Aorta (tissue), 5 donors: ENCODE measurements at regions of chr16 and their contacts with region 1.

Region 1: DNA sequence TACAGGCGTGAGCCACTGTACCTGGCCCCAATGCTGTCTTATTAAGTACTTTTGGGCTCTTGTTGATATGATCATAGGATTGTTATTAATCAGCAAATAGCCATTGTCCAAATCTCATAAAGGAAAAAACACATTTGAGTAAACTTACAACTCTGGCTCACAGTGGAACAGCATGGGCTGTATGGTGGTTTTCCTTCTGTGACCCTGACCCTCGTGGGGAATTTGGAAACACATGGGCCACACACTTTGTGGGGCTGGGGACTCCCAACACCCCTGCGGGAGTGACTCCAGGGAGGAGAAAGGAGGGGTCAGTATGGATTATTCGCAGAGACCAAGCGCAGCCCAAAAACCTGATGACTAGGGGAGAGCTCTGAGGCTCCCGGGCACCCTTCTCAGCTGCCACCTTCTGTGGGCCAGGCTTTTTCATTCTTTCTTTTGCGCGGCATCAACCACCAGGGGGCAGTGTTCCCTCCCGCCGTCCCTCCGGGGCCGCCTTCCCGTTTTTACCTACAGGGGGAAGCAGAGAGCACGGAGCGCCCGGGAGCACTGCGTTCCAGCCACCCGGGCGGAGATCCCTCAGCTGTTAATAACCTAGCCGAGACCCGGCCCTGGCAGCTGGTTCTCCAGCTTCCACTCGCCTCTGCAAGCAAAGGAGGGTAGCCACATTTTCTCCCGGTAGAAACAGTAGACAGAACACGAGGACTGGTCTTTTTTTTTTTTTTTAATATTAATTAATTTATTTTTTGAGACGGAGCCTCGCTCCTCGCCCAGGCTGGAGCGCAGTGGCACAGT is 9.7 kb downstream of the TSNAXIP1 start:
- DNase-seq: peak; percentile 87 to 96
- ATAC-seq: peak; percentile 97
- H3K4me3 ChIP-seq: no peak overlapping the region
- H3K27ac ChIP-seq: no peak overlapping the region
- H3K4me1 ChIP-seq: no peaks in the 10 kb centered on the region
- H3K27me3 ChIP-seq: no peaks in the 10 kb centered on the region

Region 2: DNA sequence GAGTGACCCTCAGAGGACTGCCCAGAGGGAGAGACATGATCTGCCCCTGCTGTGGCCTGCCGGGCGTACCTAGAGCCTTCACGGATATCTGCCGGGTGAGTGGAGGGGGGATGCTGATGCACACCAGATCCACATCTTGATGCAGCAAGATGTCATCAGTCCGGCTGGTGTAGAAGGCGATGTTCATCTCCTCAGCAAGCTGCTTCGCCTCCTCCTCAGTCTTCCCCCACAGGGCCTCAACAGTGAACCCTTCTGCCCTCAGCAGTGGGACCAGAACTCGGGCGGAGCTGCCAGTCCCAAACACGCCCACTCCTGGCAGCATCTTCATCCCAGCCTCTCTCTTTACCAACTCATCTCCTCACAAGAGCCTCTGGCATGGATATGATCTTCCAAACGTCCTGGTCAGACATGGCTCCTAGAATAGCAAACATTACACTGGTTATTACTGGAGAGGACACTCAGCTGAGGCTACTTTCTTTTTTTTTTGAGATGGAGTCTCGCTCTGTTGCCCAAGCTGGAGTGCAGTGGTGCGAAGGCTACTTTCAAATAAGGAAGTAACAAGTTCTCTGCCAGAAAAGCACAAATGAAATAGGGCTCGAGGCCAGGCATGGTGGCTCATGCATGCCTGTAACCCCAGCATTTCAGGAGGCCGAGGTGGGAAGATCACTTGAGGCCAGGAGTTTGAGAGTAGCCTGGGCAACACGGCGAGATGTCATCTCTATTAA is 130.9 kb before region 1 on chr16:
- intact Hi-C with region 1: no loop called
- DNase-seq: no peak
- ATAC-seq: peak; percentile 15
- H3K4me3 ChIP-seq: no peak overlapping the region
- H3K27ac ChIP-seq: no peak overlapping the region
- H3K4me1 ChIP-seq: no peaks in the 10 kb centered on the region
- H3K27me3 ChIP-seq: no peaks in the 10 kb centered on the region

Region 3: GRCh38 chr16:67841764-67842508 is 25.5 kb after region 1 on chr16 and contains the start of gene THAP11:
- intact Hi-C with region 1: no loop called
- DNase-seq: peak; percentile 96 to 97
- ATAC-seq: peak; percentile 92
- H3K4me3 ChIP-seq: peak within 1 kb of the TSS; percentile 50 to 81
- H3K27ac ChIP-seq: peak within 1 kb of the TSS in 1 of 2 donors; percentile 97
- H3K4me1 ChIP-seq: peaks cover 0 to 2% of the 10 kb centered on the region in 2 donors
- H3K27me3 ChIP-seq: no peaks in the 10 kb centered on the region
- total RNA-seq, gene THAP11: 21.5 to 24.7 TPM

Region 4: DNA sequence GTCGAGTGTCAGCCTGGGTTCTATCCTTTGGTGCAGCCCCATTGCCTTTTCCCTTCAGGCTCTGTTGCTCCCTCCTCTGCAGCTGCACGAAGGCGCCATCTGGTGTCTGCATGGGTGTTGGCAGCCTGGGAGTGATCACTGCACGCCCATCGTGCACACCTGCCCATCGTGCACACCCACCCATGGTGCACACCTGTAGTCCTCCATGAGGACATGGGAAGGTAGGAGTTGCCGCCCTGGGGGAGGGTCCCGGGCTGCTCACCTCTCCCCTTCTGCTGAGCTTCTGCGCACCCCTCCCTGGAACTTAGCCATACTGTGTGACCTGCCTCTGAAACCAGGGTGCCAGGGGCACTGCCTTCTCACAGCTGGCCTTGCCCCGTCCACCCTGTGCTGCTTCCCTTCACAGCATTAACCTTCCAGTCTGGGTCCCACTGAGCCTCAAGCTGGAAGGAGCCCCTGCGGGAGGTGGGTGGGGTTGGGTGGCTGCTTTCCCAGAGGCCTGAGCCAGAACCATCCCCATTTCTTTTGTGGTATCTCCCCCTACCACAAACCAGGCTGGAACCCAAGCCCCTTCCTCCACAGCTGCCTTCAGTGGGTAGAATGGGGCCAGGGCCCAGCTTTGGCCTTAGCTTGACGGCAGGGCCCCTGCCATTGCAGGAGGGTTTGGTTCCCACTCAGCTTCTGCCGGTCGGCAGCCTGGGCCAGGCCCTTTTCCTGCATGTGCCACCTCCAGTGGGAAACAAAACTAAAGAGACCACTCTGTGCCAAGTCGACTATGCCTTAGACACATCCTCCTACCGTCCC is 112.3 kb after region 1 on chr16:
- intact Hi-C with region 1: loop called (anchors 1 to 2 kb)
- DNase-seq: peak; percentile 77 to 90
- ATAC-seq: peak; percentile 78
- H3K4me3 ChIP-seq: no peak overlapping the region
- H3K27ac ChIP-seq: no peak overlapping the region
- H3K4me1 ChIP-seq: no peaks in the 10 kb centered on the region
- H3K27me3 ChIP-seq: no peaks in the 10 kb centered on the region

Region 5: GRCh38 chr16:68040507-68041288 is 224.3 kb after region 1 on chr16:
- intact Hi-C with region 1: loop called (anchors 5 kb)
- DNase-seq: peak; percentile 85 to 95
- ATAC-seq: peak; percentile 93
- H3K4me3 ChIP-seq: no peak overlapping the region
- H3K27ac ChIP-seq: no peak overlapping the region
- H3K4me1 ChIP-seq: no peaks in the 10 kb centered on the region
- H3K27me3 ChIP-seq: no peaks in the 10 kb centered on the region

Region 6: DNA sequence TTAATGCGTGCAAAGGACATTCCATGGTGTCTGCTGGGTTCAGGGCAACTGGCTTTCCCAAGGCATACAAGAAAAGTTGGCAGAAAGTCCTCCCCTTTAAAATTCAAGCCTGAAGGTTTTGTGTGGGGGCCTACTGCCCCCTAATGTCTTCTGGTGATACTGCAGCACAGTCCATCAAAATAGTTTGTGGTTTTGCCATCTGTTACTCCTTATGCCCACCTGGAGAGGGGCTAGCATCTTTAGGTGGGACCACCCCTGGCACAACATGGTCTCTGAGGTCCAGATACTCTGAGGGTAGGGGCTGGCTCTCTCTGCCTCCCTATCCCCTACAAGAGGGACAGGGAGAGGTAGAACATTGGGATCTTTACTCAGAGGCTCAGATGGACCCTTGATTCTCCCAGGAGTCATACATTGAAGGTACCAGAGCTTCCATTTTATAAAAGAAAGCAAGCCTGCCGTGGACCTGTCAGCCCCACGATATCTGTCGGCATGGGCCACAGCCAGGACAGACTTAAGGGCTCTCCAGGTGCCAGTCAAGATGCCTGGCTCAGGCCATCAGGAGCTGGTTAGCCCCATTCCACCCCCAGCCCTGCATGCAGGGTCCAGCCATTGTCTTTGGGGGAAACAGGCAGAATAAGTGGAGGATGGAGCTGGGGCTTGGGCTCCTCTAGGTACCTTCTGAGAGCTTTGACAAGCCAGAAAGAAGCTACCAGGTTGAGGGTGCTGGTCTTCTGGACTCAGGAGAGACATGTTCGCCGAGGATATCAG is 413.2 kb after region 1 on chr16:
- intact Hi-C with region 1: loop called in 1 of 2 experiments (anchors 5 kb)
- DNase-seq: peak in 1 of 2 donors; percentile 43
- ATAC-seq: peak; percentile 53
- H3K4me3 ChIP-seq: no peak overlapping the region
- H3K27ac ChIP-seq: no peak overlapping the region
- H3K4me1 ChIP-seq: no peaks in the 10 kb centered on the region
- H3K27me3 ChIP-seq: no peaks in the 10 kb centered on the region